ENCODE measurements at regions of chr2 and their contacts with region 1.

Region 1: GRCh38 chr2:17672583-17673317 is 80.9 kb downstream of the SMC6 start:
- DNase-seq: no peak
- H3K4me3 Mint-ChIP-seq: no peak overlapping the region
- H3K27ac Mint-ChIP-seq: no peak overlapping the region
- H3K4me1 Mint-ChIP-seq: peaks cover 11% of the 10 kb centered on the region
- H3K27me3 Mint-ChIP-seq: no peaks in the 10 kb centered on the region

Region 2: DNA sequence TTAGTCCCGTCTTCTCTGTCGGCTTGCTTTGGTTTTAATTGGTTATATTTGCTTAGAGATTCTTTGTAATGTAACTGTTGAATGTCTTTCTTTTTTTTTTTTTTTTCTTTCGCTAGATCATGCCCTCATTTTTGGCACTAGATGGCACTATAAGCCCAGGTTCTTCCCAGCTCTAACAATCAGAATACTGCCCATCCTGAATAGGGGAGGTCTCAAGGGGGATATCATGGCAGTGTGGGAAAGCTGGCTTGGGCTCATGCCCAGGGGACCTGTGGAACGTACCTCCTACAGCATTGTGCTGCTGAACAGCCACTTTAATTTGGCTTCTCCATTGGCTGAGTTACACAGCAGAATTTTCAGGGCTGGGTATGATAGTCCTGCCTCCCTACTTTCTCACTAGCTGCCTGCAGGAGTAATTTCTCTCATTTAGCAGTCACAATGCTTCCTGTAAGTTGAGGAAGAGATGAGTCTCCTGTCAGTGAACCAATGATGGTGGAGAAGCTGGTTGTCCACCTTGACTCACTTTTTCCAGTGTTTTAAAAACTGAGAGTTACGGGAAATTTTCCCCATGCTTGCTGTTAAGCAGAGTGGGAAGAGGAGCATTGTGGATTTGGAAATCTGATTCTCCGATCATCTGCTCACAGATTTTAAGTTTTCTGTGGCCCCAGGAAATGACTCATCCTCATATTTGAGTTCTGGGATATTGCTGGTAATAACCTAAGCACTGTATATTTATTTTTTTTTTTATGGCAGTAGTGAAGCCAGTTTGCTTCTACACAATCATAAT is 201.7 kb before region 1 on chr2:
- CTCF ChIA-PET with region 1: no interaction called
- intact Hi-C with region 1: loop called (anchors 5 kb)
- DNase-seq: no peak
- H3K4me3 Mint-ChIP-seq: no peak overlapping the region
- H3K27ac Mint-ChIP-seq: no peak overlapping the region
- H3K4me1 Mint-ChIP-seq: no peaks in the 10 kb centered on the region
- H3K27me3 Mint-ChIP-seq: no peaks in the 10 kb centered on the region

Region 3: DNA sequence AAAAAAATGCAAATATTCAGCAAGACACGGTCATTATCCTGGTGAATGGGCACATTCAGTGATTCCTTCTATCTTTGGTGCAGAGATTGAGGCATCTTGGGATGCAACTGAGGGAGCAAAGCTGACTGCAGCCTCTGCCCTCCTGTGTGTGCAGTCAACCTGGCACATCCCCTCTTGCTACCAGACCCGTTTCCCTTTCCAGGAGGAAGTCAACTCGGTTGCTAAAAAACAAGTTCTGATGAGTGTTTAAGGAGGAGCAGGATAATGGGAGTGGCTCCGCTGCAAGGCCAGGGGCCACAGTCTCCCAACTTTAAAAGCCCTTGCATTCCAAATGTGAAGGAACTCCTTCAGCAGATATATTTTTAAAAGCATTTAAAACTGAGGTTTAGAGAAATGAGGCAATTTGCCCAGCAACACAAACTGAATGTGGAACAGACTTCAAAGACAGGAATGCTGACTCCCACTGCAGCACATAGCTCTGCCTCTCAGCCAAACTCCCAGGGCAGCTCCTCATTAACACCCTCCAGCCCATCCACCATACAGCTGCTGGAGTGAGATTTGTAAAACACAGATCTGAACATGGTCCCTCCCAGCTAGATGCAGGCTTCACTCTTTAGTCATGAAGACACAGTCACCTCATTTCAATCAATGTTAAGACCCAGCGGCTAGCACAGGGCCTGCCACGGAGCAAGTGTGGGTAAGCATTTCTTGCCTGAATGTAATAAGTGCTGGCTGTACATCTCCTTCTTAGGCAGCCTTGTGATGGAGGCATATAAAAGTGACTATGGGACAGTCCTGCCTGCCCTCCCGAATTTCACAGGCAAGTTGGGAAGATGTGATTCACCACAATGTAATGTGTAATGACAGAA is 78.0 kb before region 1 on chr2:
- CTCF ChIA-PET with region 1: no interaction called
- intact Hi-C with region 1: no loop called
- DNase-seq: no peak
- H3K4me3 Mint-ChIP-seq: no peak overlapping the region
- H3K27ac Mint-ChIP-seq: no peak overlapping the region
- H3K4me1 Mint-ChIP-seq: no peaks in the 10 kb centered on the region
- H3K27me3 Mint-ChIP-seq: peaks cover 5% of the 10 kb centered on the region

Region 4: DNA sequence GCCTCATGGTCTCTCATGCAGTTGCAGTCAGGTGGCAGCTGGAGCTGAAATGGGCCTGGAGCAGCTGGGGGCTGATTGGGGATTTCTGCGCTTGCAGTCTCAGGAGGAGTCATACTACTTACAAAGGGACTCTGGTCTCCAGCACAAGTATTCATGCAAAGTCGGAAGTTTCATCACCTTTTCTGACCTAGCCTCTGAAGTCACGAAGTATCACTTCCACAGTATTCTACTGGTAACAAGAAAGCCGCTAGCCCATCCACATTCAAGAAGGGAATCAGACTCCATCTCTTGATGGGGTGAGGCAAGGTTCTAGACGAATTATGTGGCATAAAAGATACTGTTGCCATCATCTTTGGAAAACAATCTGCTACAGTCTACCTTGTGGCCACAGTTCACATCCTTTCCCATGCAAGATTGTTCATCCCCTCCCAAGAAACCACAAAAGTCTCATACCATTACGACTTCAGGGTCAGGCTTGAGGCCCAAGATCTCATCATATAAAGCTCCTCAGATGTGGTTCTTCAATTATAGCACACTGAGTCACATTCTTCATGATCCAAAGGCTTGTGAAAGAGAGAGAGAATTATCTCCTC is 14.4 kb before region 1 on chr2:
- CTCF ChIA-PET with region 1: interaction called, 11 read pairs
- intact Hi-C with region 1: no loop called
- DNase-seq: no peak
- H3K4me3 Mint-ChIP-seq: no peak overlapping the region
- H3K27ac Mint-ChIP-seq: no peak overlapping the region
- H3K4me1 Mint-ChIP-seq: peaks cover 8% of the 10 kb centered on the region
- H3K27me3 Mint-ChIP-seq: no peaks in the 10 kb centered on the region